ENCODE measurements at regions of chr9 and their contacts with region 1.

Region 1: GRCh38 chr9:22008736-22009562 is at the start of gene CDKN2B:
- H3K4me3 ChIP-seq: peak within 1 kb of the TSS; percentile 95
- H3K27ac ChIP-seq: peak within 1 kb of the TSS; percentile 85
- H3K4me1 ChIP-seq: peaks cover 3% of the 10 kb centered on the region; the same call in 1 of the 2 replicates
- CTCF ChIP-seq: peak; percentile 96

Region 2: GRCh38 chr9:21933865-21934264 is 75.1 kb before region 1 on chr9:
- CTCF ChIA-PET with region 1: no interaction called
- POLR2A ChIA-PET with region 1: no interaction called
- H3K4me3 ChIP-seq: no peak overlapping the region
- H3K27ac ChIP-seq: no peak overlapping the region
- H3K4me1 ChIP-seq: 0 out of 2 replicates have a peak, but pooled peaks cover 3% of the 10 kb centered on the region
- CTCF ChIP-seq: no peak

Region 3: DNA sequence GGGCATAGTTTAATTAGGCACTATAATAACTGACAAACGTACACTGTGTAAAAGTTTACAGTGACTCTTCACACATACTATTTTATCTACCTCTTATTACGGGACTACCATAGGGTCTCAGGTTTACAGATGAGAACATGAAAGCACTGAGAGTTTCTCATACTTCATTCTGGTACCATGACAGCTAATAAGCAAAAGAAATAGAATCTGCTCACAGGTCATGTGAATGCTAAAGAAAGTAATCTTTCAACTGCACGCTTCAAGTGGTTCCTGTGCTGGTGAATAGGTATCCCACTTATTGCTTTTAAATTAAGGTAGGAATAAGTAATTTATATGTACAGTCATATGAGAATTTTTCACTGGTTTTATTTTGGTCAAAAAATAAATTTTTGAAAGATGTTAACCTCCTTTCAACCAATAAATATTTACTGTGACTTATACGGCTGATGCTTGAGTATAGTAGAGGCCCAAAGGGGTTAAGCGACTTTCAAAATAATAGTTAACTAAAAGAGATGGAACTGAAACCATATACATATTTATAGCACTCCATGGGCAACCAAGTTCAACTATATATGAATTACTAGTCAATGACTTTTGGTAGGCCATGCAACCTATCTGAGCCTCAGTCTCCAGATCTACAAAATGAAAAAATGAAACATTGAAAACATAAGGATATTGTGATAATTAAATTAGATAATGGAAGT is 22.8 kb before region 1 on chr9:
- CTCF ChIA-PET with region 1: interaction called, 45 read pairs
- POLR2A ChIA-PET with region 1: interaction called, 18 read pairs
- H3K4me3 ChIP-seq: no peak overlapping the region; the same call in 1 of the 2 replicates
- H3K27ac ChIP-seq: no peak overlapping the region
- H3K4me1 ChIP-seq: peaks cover 38% of the 10 kb centered on the region
- CTCF ChIP-seq: no peak

Region 4: DNA sequence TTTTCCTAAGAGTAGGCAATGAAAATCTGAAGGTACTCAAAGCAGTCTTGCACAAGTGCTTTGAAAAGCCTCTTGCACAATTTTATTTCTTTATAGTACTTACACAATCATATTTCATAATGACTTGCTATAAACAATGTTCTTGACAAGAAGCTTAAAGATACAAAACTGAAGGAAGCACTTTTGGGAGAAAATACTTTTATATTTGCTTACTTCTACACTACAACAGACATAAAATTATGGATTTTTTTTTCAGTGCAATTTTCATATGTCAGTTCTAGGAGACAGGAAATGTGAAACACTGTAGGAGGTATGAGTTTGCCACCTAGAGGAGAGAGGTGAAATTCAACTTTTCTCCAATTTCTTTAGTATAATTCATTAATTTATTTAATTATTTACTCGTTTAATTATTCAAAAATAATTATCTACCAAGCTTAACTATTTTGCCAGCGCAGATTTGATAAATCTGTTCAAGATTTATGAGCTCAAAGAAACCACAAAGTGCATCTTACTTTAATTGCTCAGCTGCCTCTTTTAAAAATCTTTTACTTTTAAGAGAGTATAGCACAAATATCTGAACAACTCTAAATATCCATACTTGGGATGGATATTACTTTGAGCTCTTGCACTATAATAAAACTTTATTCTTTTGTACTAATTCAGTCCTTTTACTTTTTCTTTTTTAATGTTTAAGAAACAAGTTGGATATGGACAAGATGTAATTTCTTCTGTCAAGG is 29.2 kb after region 1 on chr9:
- CTCF ChIA-PET with region 1: interaction called, 71 read pairs
- POLR2A ChIA-PET with region 1: interaction called, 23 read pairs
- H3K4me3 ChIP-seq: no peak overlapping the region
- H3K27ac ChIP-seq: no peak overlapping the region
- H3K4me1 ChIP-seq: peaks cover 10% of the 10 kb centered on the region; the same call in 1 of the 2 replicates
- CTCF ChIP-seq: no peak

Region 5: GRCh38 chr9:22084336-22085035 is 75.5 kb after region 1 on chr9:
- CTCF ChIA-PET with region 1: interaction called, 3 read pairs
- POLR2A ChIA-PET with region 1: interaction called, 11 read pairs
- H3K4me3 ChIP-seq: no peak overlapping the region
- H3K27ac ChIP-seq: peak overlapping the region; percentile 22; the same call in 1 of the 2 replicates
- H3K4me1 ChIP-seq: peaks cover 19% of the 10 kb centered on the region
- CTCF ChIP-seq: no peak

Region 6: GRCh38 chr9:22141906-22142305 is 133.0 kb after region 1 on chr9:
- CTCF ChIA-PET with region 1: interaction called, 6 read pairs
- POLR2A ChIA-PET with region 1: interaction called, 17 read pairs
- H3K4me3 ChIP-seq: no peak overlapping the region
- H3K27ac ChIP-seq: peak overlapping the region; percentile 43
- H3K4me1 ChIP-seq: peaks cover 10% of the 10 kb centered on the region; the same call in 1 of the 2 replicates
- CTCF ChIP-seq: no peak

Region 7: DNA sequence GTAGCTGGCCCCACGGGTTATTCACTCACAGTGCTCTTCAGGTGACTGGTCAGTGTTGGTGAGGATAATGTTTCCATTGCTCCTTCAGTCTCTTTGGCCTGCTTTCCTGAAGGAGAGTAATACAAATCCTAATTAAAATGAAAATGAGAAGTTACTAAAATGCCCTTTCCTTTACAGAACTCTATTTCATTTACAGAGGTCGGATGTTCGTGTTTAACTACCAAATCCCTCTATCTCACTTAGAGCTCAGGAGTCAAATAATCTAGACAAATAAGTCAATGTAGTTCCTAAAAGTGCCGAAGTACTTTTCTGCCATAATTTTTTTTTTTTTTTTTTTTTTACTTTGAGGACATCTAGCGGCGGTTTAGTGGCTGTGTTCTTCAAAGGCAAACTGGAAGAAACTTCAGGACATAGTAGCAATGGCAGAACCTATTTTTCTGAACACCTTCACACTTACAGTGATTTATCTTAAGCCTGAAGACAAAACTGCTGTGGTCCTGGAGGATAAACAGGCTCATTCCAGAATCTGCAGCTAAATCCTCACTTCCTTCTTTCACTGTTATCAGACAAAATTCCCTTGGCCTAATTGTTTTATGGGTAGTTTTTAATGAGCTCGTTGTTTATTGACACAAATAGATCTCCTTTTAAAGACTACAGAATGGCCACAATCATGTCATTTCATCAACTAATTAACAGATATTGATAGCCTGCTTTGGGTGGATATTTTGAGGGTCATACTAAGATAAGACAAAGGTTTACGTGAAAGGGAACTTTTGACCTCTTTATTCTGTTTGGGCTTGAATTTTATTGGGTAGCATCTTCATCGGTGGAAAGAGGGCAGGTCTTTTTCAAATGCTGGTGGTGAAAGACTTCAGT is 230.1 kb after region 1 on chr9:
- CTCF ChIA-PET with region 1: interaction called, 65 read pairs
- POLR2A ChIA-PET with region 1: interaction called, 51 read pairs
- H3K4me3 ChIP-seq: peak overlapping the region; percentile 9; the same call in 1 of the 2 replicates
- H3K27ac ChIP-seq: peak overlapping the region; percentile 81
- H3K4me1 ChIP-seq: peaks cover 22% of the 10 kb centered on the region
- CTCF ChIP-seq: no peak